Common myeloid progenitor, CD34-positive (primary cell): ENCODE measurements at regions of chr10 and their contacts with region 1.

Region 1: DNA sequence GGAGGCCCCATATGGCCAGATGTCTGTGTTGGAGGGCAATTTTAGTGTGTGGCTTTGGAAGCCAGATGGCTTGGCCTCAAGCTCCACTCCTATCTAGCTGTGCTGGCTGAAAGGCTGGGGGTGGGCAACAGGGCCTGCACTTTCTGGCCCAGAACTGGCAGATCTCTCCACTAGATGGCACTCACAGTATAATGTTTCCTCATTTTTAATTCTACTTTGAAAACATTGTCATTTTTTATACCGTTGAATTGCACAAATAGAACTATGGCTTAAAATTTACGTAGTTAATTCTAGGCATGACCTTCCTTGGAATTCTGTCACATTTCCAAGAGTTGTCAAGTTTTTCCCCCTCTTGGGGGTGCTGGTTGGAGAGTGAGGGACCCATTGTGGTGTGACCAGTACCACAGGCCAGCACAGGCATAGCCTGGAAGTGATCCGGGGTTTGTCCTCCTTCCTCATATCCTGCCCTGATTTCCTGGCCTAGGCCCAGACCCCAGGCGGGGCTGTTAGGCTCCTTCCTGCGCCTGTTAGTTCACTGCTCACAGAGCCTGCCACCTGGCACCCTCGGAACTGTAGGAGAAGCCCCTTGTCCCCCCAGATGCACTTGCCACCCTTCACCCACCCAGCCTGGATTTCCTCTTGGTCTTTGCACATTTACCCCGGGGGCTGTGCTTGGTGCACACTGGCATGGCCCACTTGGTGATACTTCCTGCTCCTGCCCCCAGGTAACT is 52.8 kb downstream of the ARHGAP22 start:
- DNase-seq: peak; percentile 66 to 83 (median 79)
- H3K4me3 ChIP-seq: peak overlapping the region in 1 of 7 experiments; percentile 17
- H3K27ac ChIP-seq: no peak overlapping the region
- H3K4me1 ChIP-seq: peaks cover 0 to 11% (median 6%) of the 10 kb centered on the region in 4 experiments
- H3K27me3 ChIP-seq: no peaks in the 10 kb centered on the region

Region 2: GRCh38 chr10:48572414-48572813 is 20.4 kb after region 1 on chr10:
- CTCF ChIA-PET with region 1: interaction called, 19 read pairs
- POLR2A ChIA-PET with region 1: no interaction called
- DNase-seq: no peak
- H3K4me3 ChIP-seq: no peak overlapping the region
- H3K27ac ChIP-seq: no peak overlapping the region
- H3K4me1 ChIP-seq: peaks cover 3 to 29% (median 20%) of the 10 kb centered on the region in 4 experiments
- H3K27me3 ChIP-seq: no peaks in the 10 kb centered on the region

Region 3: DNA sequence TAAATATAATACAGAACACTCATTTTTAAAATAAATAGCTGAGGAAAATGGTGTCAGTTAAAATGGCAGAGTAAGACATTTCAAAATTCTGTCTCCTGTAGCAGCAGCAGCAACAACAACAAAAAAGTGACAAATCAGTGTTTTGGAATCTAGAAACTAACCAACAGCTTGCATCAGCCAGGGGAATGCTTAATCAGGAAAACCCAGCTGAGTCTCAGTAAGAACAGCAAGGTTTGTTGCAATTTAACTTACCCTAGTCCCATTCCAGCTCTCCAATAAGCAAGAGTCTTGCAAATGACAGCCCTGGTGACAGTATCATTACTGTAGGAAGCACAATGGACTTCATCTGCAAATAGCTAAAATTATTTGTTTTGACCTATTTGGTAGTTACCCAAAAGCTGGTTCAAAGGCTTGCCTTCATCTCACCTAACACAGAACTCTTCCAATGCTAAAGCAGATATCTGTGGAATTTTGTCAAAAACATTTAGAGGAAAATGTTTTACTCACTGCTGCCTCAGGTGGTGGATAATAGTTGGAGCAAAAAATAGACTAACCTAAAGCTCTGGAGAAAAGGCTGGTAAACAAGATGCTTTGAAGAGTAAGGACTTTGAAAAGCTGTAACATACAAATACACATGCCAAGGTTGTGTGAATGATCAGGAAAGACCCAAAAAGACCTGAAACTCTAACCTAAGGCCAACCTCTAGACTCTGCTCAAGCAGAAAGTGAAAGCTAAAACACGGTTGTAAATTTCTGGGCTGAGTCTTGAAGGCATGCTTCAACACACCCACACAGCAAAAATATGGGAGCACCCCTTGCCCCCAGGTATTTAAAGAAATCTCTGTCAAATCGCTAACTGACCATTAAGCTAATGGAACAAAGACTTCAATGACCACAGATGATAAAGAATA is 62.7 kb after region 1 on chr10:
- CTCF ChIA-PET with region 1: interaction called, 19 read pairs
- POLR2A ChIA-PET with region 1: no interaction called
- DNase-seq: no peak
- H3K4me3 ChIP-seq: no peak overlapping the region
- H3K27ac ChIP-seq: no peak overlapping the region
- H3K4me1 ChIP-seq: no peaks in the 10 kb centered on the region
- H3K27me3 ChIP-seq: no peaks in the 10 kb centered on the region

Region 4: DNA sequence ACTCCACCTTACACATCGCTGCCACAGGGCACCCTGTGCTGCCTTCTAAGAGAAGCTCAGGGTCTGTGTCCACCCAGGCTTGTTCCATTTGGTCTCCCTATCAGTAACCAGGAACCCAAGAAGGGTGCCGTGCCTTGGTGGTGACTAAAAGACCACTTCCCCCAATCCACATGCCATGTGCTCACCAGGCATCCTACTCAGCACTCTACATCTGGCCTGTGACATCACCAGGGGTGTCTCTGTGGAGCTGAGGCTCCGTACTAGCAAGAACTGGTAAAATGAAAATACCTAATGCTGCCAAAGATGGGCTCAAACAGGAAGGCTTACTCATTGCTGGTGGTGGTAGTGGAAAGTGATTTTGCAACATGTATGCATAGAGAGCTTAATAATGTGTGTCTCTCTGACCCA is 728.0 kb after region 1 on chr10:
- CTCF ChIA-PET with region 1: no interaction called
- POLR2A ChIA-PET with region 1: no interaction called
- DNase-seq: peak; percentile 42 to 85 (median 85)
- H3K4me3 ChIP-seq: no peak overlapping the region
- H3K27ac ChIP-seq: no peak overlapping the region
- H3K4me1 ChIP-seq: peaks cover 0 to 28% (median 13%) of the 10 kb centered on the region in 4 experiments
- H3K27me3 ChIP-seq: no peaks in the 10 kb centered on the region